Transverse colon (tissue), 4 donors: ENCODE measurements at regions of chr1 and their contacts with region 1.

Region 1: GRCh38 chr1:92960395-92961130 is 699 bp downstream of the DIPK1A start:
- DNase-seq: peak; percentile 74
- H3K4me3 ChIP-seq: peak overlapping the region; percentile 76 to 98 (median 90)
- H3K27ac ChIP-seq: peak overlapping the region; percentile 96 to 98 (median 98)
- H3K4me1 ChIP-seq: peaks cover 13 to 46% (median 21%) of the 10 kb centered on the region in 4 donors
- H3K27me3 ChIP-seq: no peaks in the 10 kb centered on the region
- CTCF ChIP-seq: peak; percentile 49 to 81 (median 57)
- EP300 ChIP-seq: no peak
- POLR2A ChIP-seq: peak; percentile 67

Region 2: GRCh38 chr1:92858564-92859399 is 101.8 kb before region 1 on chr1:
- in situ Hi-C with region 1: no loop called
- intact Hi-C with region 1: loop called (anchors 10 kb)
- DNase-seq: peak; percentile 59
- H3K4me3 ChIP-seq: peak overlapping the region in 3 of 4 donors; percentile 10 to 13 (median 12)
- H3K27ac ChIP-seq: peak overlapping the region; percentile 53 to 63 (median 60)
- H3K4me1 ChIP-seq: peaks cover 0 to 25% (median 13%) of the 10 kb centered on the region in 4 donors
- H3K27me3 ChIP-seq: no peaks in the 10 kb centered on the region
- CTCF ChIP-seq: peak; percentile 88 to 100 (median 96)
- EP300 ChIP-seq: no peak
- POLR2A ChIP-seq: no peak

Region 3: DNA sequence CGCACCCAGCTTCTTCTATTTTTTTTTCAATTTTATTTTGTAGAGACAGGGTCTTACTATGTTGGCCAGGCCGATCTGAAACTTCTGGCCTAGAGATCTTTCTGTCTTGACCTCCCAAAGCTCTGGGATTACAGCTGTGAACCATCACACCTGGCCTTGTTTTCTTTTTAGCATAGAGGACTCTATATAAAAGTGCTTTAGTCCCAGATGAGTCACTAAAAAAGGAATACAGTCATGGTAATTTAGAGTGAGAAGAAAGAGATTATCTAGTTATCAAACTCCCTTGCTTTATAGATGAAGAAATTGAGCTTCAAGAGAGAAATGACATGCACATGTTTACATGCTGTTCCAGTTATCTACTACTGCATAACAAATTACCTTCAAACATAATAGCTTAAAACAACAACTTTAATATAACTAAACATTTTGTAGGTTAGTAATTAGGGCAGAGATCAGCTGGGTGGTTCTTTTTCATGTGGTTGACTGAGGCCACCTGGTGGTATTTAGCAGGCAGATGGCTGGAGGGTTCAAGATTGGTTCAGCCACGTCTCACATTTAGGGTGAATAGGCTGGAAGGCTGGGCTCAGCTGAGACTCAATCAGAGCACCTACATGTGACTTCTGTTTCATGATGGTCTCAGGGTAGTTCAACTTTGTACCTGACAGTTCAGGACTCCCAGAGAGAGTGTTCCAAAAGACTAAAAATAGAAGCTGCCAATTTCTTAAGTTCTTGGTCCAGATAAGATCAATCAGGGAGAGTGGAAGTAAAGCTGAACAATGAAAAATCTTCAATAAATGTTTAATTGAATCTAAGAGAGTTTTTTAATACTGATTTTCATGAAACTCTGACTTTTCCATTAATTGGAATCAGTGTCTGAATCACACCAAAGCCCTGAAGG is 101.6 kb after region 1 on chr1:
- in situ Hi-C with region 1: no loop called
- intact Hi-C with region 1: no loop called
- DNase-seq: peak; percentile 43
- H3K4me3 ChIP-seq: no peak overlapping the region
- H3K27ac ChIP-seq: no peak overlapping the region
- H3K4me1 ChIP-seq: no peaks in the 10 kb centered on the region
- H3K27me3 ChIP-seq: no peaks in the 10 kb centered on the region
- CTCF ChIP-seq: peak; percentile 39 to 78 (median 59)
- EP300 ChIP-seq: no peak
- POLR2A ChIP-seq: no peak

Region 4: GRCh38 chr1:93164816-93165215 is 204.3 kb after region 1 on chr1:
- in situ Hi-C with region 1: no loop called
- intact Hi-C with region 1: no loop called
- DNase-seq: no peak
- H3K4me3 ChIP-seq: no peak overlapping the region
- H3K27ac ChIP-seq: no peak overlapping the region
- H3K4me1 ChIP-seq: peaks cover 0 to 8% (median 4%) of the 10 kb centered on the region in 4 donors
- H3K27me3 ChIP-seq: no peaks in the 10 kb centered on the region
- CTCF ChIP-seq: no peak
- EP300 ChIP-seq: no peak
- POLR2A ChIP-seq: no peak